Right cardiac atrium (tissue), 5 donors: ENCODE measurements at regions of chr11 and their contacts with region 1.

Region 1: GRCh38 chr11:33687733-33688479 is 12.7 kb downstream of the C11orf91 start:
- DNase-seq: no peak
- ATAC-seq: no peak
- H3K4me3 ChIP-seq: no peak overlapping the region
- H3K27ac ChIP-seq: no peak overlapping the region
- H3K4me1 ChIP-seq: peaks cover 23% of the 10 kb centered on the region
- H3K27me3 ChIP-seq: no peaks in the 10 kb centered on the region

Region 2: DNA sequence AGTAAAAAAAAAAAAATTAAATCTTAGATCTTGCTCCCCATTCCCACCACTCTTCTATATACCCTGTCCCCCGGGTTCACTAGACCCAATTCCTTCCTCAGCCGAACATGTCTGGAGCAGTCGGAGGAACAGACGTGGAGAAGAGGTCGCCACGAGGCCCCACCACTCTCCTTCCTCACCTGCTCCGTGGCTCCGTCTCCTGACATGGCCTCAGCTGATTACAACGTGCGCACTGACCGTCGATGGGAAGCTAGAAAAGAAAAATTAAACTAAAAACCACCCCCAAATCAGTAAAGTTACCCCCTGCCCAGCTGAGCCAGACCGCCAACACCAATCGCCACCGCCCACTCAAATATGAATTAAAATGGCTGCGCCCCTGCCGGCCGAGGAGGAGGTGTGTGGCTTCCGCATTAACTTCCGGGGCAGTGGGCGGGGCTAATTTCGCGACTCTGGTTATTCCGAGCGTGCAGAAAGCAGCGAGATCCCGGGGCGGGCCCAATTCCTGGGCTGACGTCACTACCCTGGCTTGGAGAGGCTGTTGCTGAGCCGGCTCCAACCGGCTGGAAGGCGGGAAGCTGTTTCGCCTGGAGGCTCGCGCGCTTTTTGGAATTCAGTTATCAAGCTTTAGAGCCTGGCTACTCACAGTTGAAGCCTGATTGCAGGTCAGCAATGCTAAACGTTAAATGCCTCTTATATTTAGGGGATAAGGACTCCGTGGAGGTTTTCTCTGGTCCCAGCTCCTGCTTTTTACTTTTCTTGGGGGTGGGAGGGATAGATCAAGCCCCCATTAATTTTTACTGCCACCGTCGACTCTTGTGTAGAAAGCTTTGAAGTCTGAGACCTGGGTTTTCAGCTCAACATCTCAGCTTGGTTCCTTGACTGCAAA is 526.5 kb before region 1 on chr11 and contains the start of gene CSTF3:
- intact Hi-C with region 1: loop called in 2 of 4 experiments (anchors 10 kb)
- DNase-seq: peak; percentile 100
- ATAC-seq: peak; percentile 100
- H3K4me3 ChIP-seq: peak within 1 kb of the TSS; percentile 100
- H3K27ac ChIP-seq: peak within 1 kb of the TSS; percentile 89
- H3K4me1 ChIP-seq: peaks cover 2% of the 10 kb centered on the region
- H3K27me3 ChIP-seq: no peaks in the 10 kb centered on the region
- total RNA-seq, gene CSTF3: 11.2 to 18.2 (median 13.2) TPM

Region 3: GRCh38 chr11:33344611-33345010 is 343.3 kb before region 1 on chr11:
- intact Hi-C with region 1: no loop called
- DNase-seq: no peak
- ATAC-seq: peak in 1 of 2 donors; percentile 31
- H3K4me3 ChIP-seq: no peak overlapping the region
- H3K27ac ChIP-seq: no peak overlapping the region
- H3K4me1 ChIP-seq: no peaks in the 10 kb centered on the region
- H3K27me3 ChIP-seq: no peaks in the 10 kb centered on the region

Region 4: DNA sequence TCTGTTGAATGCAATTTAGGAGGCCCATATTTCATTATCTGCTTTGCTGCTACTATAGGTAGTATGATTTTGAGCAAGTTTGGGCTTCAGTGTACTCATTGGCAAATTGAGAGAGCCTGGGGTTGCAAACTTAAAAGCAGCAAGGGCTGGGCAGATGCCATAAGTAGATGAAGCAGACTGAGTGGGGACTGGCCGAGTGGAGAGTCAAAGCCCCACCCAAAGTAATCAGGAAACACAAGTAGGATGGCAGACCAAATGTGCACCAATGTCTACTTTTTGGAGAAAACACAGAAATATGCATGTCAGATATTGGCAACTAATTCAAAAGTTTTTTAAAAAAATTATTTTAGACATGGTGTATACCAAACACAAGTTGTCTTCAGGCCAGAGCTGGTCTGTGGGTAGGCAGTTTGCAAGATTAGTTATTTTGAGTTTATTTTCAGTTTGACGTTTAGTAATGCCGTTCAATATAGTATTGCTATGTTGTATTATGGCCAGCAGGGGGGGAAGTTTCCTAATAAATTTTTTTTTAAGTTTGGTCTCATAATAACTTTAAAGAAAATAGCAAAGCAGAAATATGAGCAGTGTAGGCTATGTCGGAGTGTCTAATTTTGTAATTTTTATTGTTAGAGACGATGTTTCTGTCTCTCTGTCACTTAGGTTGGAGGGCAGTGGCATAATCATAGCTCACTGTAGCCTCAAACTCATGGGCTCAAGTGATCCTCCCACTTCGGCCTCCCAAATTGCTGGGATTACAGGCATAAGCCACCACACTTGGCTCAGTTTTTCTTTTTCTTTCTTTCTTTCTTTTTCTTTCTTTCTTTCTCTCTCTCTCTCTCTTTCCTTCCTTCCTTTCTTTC is 325.6 kb before region 1 on chr11:
- intact Hi-C with region 1: loop called (anchors 5 kb)
- DNase-seq: no peak
- ATAC-seq: peak; percentile 30 to 53
- H3K4me3 ChIP-seq: no peak overlapping the region
- H3K27ac ChIP-seq: no peak overlapping the region
- H3K4me1 ChIP-seq: peaks cover 3% of the 10 kb centered on the region
- H3K27me3 ChIP-seq: no peaks in the 10 kb centered on the region

Region 5: DNA sequence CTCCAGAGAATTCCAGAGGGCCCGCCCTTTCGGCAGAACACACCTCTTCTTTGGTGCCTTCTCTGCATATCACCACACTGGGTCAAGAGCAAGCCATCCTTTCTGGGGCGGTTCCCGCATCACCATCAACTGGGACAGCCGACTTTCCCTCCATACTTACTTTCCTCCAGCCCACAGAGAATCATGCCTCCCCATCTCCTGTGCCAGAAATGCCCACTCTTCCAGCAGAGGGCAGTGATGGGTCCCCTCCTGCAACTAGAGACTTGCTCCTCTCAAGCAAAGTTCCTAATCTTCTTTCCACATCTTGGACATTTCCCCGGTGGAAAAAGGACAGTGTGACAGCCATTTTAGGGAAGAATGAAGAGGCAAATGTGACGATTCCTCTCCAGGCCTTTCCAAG is 145.0 kb before region 1 on chr11:
- intact Hi-C with region 1: loop called in 3 of 4 experiments (anchors 5 to 10 kb)
- DNase-seq: peak; percentile 46 to 76 (median 67)
- ATAC-seq: peak; percentile 11 to 74
- H3K4me3 ChIP-seq: no peak overlapping the region
- H3K27ac ChIP-seq: no peak overlapping the region
- H3K4me1 ChIP-seq: no peaks in the 10 kb centered on the region
- H3K27me3 ChIP-seq: no peaks in the 10 kb centered on the region

Region 6: GRCh38 chr11:33736148-33736809 is 48.4 kb after region 1 on chr11 and contains the start of gene CD59:
- intact Hi-C with region 1: loop called in 2 of 4 experiments (anchors 5 kb)
- DNase-seq: peak; percentile 98 to 99 (median 99)
- ATAC-seq: peak; percentile 97
- H3K4me3 ChIP-seq: peak within 1 kb of the TSS; percentile 85
- H3K27ac ChIP-seq: peak within 1 kb of the TSS; percentile 92
- H3K4me1 ChIP-seq: peaks cover 15% of the 10 kb centered on the region
- H3K27me3 ChIP-seq: no peaks in the 10 kb centered on the region
- total RNA-seq, gene CD59: 619 to 780 (median 669) TPM